ENCODE measurements at regions of chr1 and their contacts with region 1.

Region 1: GRCh38 chr1:153598309-153599172 is 14.4 kb downstream of the S100A16 start:
- DNase-seq: peak; percentile 23
- H3K4me3 ChIP-seq: no peak overlapping the region
- H3K27ac ChIP-seq: peak overlapping the region in 1 of 4 donors; percentile 14
- H3K4me1 ChIP-seq: peaks cover 0 to 3% (median 0%) of the 10 kb centered on the region in 4 donors
- H3K27me3 ChIP-seq: no peaks in the 10 kb centered on the region
- CTCF ChIP-seq: no peak
- EP300 ChIP-seq: no peak
- POLR2A ChIP-seq: peak; percentile 19

Region 2: GRCh38 chr1:153465811-153466636 is 132.5 kb before region 1 on chr1:
- in situ Hi-C with region 1: no loop called
- intact Hi-C with region 1: no loop called
- DNase-seq: peak; percentile 47
- H3K4me3 ChIP-seq: no peak overlapping the region
- H3K27ac ChIP-seq: no peak overlapping the region
- H3K4me1 ChIP-seq: peaks cover 0 to 5% (median 0%) of the 10 kb centered on the region in 4 donors
- H3K27me3 ChIP-seq: peaks cover 3% of the 10 kb centered on the region
- CTCF ChIP-seq: peak; percentile 70 to 87 (median 82)
- EP300 ChIP-seq: no peak
- POLR2A ChIP-seq: no peak

Region 3: DNA sequence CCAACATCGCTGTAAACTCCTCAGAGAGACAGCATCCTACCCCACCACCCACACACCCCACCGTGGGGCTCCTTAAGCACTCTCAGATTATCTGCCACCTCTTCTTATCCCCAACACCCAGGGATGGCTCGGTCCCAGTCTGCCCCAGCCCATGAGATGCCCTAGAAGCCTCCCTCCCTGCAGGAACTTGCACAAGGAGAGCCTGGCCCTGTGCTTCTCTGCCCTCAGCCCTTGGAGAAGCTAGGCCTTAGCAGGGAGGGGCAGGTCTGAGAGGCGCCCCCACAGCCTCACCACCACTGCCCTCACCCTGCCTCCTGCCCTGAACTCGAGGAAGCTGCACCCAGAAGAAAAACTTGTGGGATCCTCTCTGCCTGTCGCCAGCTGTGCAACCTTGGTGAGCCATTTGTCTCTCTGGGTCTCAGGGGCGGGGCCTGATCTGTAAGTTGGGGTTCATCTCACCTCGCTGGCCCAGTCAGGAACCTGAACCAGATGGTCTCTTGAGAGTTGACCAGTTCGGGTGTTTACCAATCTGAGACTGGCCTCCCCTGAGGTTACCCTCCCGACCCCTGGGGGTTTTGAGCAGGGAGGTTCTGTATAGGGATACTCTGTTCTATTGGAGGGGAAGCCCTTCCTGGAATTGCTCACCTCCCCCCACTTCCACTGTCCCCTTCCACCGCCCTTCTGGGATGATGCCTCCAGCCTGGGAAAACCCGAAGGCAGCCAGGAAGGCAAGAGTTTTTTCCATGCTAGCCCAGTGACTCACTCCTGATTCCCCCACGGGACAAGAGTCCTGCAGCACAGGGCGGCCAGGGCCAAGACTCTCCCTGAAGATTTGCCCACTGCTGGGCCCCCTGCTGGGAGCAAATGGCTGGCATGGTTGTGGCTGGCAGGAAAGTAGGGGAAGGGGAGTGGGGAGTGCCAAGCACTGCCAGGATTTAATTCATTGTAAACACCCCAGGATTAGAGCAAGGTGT is 49.5 kb before region 1 on chr1 and contains the start of gene S100A3:
- in situ Hi-C with region 1: no loop called
- intact Hi-C with region 1: no loop called
- DNase-seq: peak; percentile 51
- H3K4me3 ChIP-seq: no peak within 1 kb of the TSS
- H3K27ac ChIP-seq: peak within 1 kb of the TSS; percentile 34 to 60 (median 57)
- H3K4me1 ChIP-seq: peaks cover 42 to 57% (median 48%) of the 10 kb centered on the region in 4 donors
- H3K27me3 ChIP-seq: no peaks in the 10 kb centered on the region
- CTCF ChIP-seq: no peak
- EP300 ChIP-seq: peak; percentile 39
- POLR2A ChIP-seq: no peak
- total RNA-seq, gene S100A3: 0.64 TPM in 1 of 4 donors, not detected in the others

Region 4: DNA sequence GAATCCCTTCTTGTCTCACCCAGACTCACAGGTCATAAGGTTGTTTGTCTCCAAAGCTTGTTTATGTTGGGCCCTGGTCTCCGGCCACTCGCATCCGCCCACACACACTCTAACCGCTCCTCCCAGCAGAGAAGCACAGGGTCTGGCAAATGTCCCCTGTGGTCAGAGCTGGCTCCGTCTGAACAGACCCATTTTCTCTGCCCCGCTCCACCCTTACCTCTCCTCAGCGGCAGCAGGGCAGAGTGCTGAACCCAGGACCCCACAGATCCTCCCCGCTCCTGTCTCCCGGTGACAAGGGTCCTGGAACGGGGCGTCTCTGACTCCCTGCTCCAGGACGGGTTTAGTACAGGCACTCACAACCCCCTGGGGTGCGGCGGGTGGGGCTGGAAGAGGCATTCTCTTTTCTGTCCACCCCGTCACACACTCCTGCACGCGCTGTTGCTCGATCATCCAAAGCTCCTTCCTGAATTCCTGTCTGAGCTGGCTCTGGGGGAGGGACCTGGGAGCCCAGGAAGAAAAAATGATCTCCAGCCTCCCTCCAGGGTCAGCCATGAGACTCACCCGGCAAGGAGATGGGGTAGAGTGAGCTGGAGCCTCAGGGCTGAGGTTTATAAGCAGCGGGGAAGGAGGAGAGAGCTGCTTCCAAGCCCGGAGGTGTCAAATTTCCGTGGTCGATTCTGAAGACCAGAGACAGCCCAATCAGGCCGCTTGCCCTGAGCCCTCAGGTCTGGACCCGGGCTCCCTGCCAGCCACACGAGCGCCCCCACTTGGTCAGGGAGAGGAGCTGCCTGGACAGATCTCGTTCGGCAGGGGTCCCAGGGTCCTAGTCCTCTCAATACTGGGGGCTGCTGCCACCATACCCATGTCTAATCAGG is 28.6 kb after region 1 on chr1 and contains the start of gene S100A13:
- in situ Hi-C with region 1: no loop called
- intact Hi-C with region 1: loop called (anchors 1 kb)
- DNase-seq: peak; percentile 71
- H3K4me3 ChIP-seq: peak within 1 kb of the TSS; percentile 37 to 49 (median 41)
- H3K27ac ChIP-seq: peak within 1 kb of the TSS; percentile 83 to 95 (median 90)
- H3K4me1 ChIP-seq: peaks cover 4 to 44% (median 25%) of the 10 kb centered on the region in 4 donors
- H3K27me3 ChIP-seq: no peaks in the 10 kb centered on the region
- CTCF ChIP-seq: peak; percentile 47 to 89 (median 65)
- EP300 ChIP-seq: no peak
- POLR2A ChIP-seq: peak; percentile 81
- total RNA-seq, gene S100A13: 33.8 to 67.8 (median 45.5) TPM

Region 5: GRCh38 chr1:153649863-153650235 is 51.3 kb after region 1 on chr1:
- in situ Hi-C with region 1: no loop called
- intact Hi-C with region 1: no loop called
- DNase-seq: no peak
- H3K4me3 ChIP-seq: no peak overlapping the region
- H3K27ac ChIP-seq: no peak overlapping the region
- H3K4me1 ChIP-seq: peaks cover 0 to 11% (median 4%) of the 10 kb centered on the region in 4 donors
- H3K27me3 ChIP-seq: no peaks in the 10 kb centered on the region
- CTCF ChIP-seq: no peak
- EP300 ChIP-seq: no peak
- POLR2A ChIP-seq: no peak

Region 6: GRCh38 chr1:153698020-153698931 is 99.7 kb after region 1 on chr1:
- in situ Hi-C with region 1: no loop called
- intact Hi-C with region 1: no loop called
- DNase-seq: no peak
- H3K4me3 ChIP-seq: peak overlapping the region in 1 of 4 donors; percentile 11
- H3K27ac ChIP-seq: peak overlapping the region; percentile 51 to 76 (median 69)
- H3K4me1 ChIP-seq: peaks cover 0 to 3% (median 0%) of the 10 kb centered on the region in 4 donors
- H3K27me3 ChIP-seq: no peaks in the 10 kb centered on the region
- CTCF ChIP-seq: no peak
- EP300 ChIP-seq: no peak
- POLR2A ChIP-seq: no peak

Measured in transverse colon (tissue), 4 donors.